ENCODE measurements at regions of chr15 and their contacts with region 1.

Region 1: GRCh38 chr15:74768771-74769342 is 13.0 kb upstream of the CSK start:
- DNase-seq: peak in 1 of 2 experiments; percentile 52
- H3K4me3 ChIP-seq: no peak overlapping the region
- H3K27ac ChIP-seq: no peak overlapping the region
- H3K4me1 ChIP-seq: peaks cover 8% of the 10 kb centered on the region
- H3K27me3 ChIP-seq: no peaks in the 10 kb centered on the region
- CTCF ChIP-seq: peak; percentile 90

Region 2: DNA sequence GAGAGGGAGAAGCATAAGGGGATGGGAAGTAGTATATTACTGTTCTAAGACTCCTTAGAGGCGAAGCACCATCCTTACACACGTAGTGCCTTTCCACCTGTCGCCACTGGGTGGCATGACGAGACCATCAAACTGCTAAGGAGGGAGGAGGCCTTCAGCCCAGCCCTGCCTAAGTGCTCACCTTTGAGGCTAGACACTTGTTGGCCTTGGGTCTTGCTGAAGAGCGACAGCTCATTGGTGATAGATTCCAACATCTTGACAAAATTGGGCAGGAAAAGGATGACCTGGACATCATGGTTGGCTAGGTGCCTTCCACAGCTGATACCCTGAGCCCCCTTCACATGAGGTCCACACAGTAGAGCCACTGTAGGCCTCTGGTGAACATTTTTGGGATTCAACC is 133.6 kb before region 1 on chr15:
- CTCF ChIA-PET with region 1: interaction called, 28 read pairs
- POLR2A ChIA-PET with region 1: interaction called, 4 read pairs
- intact Hi-C with region 1: loop called (anchors 1 kb)
- DNase-seq: peak in 1 of 2 experiments; percentile 58
- H3K4me3 ChIP-seq: no peak overlapping the region
- H3K27ac ChIP-seq: no peak overlapping the region
- H3K4me1 ChIP-seq: no peaks in the 10 kb centered on the region
- H3K27me3 ChIP-seq: no peaks in the 10 kb centered on the region
- CTCF ChIP-seq: peak; percentile 94

Region 3: DNA sequence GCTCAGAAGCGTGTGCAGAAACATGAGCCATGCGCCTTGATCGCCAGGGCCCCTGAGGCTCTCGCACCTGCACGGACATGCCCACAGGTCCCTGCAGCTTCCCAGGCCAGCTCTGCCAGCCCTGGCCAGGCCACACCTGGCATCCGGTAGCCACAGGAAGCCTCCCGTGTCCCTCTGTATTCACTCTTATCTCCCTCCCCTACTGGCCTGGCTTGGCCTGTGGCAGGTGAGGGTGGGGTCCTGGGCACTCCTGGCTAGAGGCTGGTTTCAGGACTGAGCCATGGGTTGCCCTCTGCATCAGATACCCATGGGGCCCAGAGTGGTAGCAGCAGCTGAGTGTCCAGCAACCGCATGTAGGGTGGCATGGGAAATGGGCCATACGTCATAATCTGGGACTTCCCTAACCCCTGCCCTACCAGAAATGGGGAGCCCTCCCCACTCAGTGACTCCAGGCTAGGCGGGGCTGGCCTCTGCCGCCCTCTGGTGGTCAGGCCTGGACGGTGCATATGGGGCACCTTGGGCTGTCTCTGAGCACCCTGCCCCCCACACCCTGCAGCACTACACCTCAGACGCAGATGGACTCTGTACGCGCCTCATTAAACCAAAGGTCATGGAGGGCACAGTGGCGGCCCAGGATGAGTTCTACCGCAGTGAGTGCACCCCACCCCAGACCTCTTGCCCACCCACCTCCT is 31.1 kb after region 1 on chr15:
- CTCF ChIA-PET with region 1: interaction called, 5 read pairs
- POLR2A ChIA-PET with region 1: no interaction called
- intact Hi-C with region 1: loop called (anchors 1 kb)
- DNase-seq: peak; percentile 63 to 89
- H3K4me3 ChIP-seq: no peak overlapping the region
- H3K27ac ChIP-seq: no peak overlapping the region
- H3K4me1 ChIP-seq: 0 out of 2 replicates have a peak, but pooled peaks cover 8% of the 10 kb centered on the region
- H3K27me3 ChIP-seq: no peaks in the 10 kb centered on the region
- CTCF ChIP-seq: peak; percentile 96

Region 4: DNA sequence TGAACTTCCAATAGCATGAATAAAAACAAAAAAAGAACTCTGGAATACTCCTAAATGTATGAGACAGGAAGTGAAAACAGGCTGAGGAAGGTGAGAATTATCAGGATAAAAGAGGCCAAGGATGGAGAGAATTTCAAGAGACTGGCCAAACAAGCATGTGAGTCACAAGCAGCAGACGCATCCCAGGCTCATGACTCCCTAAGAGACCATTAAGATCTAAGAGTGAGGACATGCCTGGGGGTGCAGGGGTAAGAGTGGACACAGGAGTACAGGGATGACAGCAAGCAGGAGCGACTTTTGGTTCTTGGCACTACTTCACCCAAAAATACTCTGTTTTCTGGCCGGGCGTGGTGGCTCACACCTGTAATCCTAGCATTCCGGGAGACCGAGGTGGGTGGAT is 97.2 kb after region 1 on chr15:
- CTCF ChIA-PET with region 1: no interaction called
- POLR2A ChIA-PET with region 1: interaction called, 20 read pairs
- intact Hi-C with region 1: no loop called
- DNase-seq: peak; percentile 46 to 71
- H3K4me3 ChIP-seq: no peak overlapping the region
- H3K27ac ChIP-seq: peak overlapping the region; percentile 49; the same call in 1 of the 2 replicates
- H3K4me1 ChIP-seq: peaks cover 67% of the 10 kb centered on the region
- H3K27me3 ChIP-seq: no peaks in the 10 kb centered on the region
- CTCF ChIP-seq: no peak

Region 5: DNA sequence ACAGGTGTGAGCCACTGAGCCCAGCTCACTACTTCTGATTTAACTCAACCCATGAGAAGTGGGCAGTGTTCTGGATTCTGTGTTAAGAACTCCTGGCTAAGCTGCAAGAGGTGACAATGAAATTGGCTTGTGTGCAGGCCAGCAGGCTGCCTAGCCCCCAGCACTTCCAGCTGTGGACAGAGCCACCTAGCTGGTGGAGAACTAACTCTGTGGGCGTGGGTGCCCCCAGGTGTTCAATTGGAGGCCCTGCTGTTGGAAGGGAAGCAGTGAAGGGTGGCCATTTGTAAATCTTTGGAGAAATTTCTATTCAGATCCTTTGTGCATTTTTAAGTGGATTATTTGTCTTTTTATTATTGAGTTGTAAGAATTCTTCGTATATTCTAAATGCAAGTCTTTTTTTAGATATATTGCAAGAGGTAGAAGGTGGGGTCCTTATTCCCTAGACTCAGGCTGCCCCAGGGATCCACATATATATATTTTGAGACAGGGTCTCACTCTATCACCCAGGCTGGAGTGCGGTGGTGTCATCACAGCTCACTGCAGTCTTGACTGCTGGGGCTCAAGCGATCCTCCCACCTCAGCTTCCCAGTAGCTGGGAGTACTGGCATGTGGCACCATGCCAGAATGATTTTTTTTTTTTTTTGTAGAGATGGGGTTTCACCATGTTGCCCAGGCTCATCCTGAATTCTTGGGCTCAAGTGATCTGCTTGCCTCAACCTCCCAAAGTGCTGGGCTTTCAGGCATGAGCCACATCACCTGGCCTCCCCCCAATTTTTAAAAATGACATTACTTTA is 219.3 kb after region 1 on chr15:
- CTCF ChIA-PET with region 1: interaction called, 4 read pairs
- POLR2A ChIA-PET with region 1: no interaction called
- intact Hi-C with region 1: loop called (anchors 1 kb)
- DNase-seq: peak; percentile 59 to 60
- H3K4me3 ChIP-seq: no peak overlapping the region
- H3K27ac ChIP-seq: no peak overlapping the region
- H3K4me1 ChIP-seq: peaks cover 16% of the 10 kb centered on the region
- H3K27me3 ChIP-seq: peaks cover 25% of the 10 kb centered on the region
- CTCF ChIP-seq: peak; percentile 83

Measured in PC-9 (cell line).